PC-3 (cell line): ENCODE measurements at regions of chr5 and their contacts with region 1.

Region 1: DNA sequence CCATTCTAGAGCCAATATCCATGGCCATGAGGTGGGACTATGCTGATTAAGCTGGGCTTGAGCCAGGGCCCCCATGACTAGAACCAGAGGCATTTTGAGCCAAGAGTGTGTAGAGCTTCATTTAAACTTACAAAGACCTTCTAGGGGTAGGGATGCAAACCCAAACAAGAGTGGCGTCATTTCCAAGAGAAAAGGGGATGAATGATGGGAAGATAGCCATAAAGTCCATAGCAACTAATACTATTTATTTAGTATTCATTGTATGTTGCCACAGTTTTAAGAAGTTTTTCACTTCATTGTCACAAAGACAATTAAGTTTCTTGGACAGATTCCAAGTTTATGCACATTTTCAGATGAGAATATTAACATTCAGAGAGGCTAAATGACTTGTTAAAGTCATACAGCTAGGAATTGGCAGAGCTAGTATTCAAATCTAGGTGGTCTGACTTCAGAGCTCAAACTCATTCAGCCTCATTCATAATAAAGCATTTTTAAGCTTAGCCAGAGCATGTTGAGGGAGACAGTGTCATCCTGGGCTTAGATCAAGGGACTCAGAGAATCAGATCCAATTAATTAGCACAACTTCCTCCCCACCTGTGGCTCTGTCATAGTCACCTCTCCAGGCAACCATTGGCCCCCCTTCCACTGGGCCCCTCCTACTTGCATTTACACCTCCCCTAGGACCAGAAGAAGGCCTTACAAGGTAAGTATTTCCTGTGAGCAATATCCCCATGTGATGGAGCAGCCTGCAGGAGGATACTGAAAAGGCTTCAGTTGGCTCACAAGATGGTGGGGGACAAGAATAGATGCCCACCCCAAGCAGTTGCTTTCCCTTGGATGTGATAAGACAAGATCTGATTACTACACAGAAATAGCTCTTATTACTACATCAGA is 95.0 kb upstream of the PCSK1 start:
- DNase-seq: no peak
- ATAC-seq: no peak
- H3K4me3 ChIP-seq: no peak overlapping the region
- H3K27ac ChIP-seq: no peak overlapping the region
- H3K4me1 ChIP-seq: no peaks in the 10 kb centered on the region
- H3K27me3 ChIP-seq: no peaks in the 10 kb centered on the region
- CTCF ChIP-seq: no peak

Region 2: DNA sequence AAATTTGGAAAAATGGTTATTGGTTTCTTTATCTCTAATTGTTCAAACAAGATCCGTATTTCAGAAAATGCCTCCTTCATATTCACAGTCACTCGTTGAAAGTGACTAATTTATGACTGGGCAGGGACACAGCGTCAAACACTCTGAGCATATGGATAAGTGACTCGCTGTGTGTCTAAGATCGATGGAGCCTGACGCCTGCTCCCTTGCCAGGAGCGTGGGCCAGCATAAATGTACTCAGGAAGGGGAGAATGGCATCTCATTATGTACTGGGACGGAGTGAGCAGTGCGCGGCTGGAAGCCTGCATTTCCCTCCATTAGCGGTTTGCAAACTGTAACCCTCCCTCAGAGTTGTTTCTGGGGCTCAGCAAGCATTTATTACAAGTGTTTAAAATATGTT is 54.3 kb after region 1 on chr5:
- CTCF ChIA-PET with region 1: no interaction called
- POLR2A ChIA-PET with region 1: no interaction called
- intact Hi-C with region 1: loop called (anchors 5 kb)
- DNase-seq: peak; percentile 68
- ATAC-seq: peak; percentile 98
- H3K4me3 ChIP-seq: peak overlapping the region; percentile 34; the same call in 1 of the 2 replicates
- H3K27ac ChIP-seq: no peak overlapping the region
- H3K4me1 ChIP-seq: no peaks in the 10 kb centered on the region
- H3K27me3 ChIP-seq: no peaks in the 10 kb centered on the region
- CTCF ChIP-seq: no peak

Region 3: GRCh38 chr5:97208714-97209113 is 680.7 kb after region 1 on chr5:
- CTCF ChIA-PET with region 1: no interaction called
- POLR2A ChIA-PET with region 1: no interaction called
- intact Hi-C with region 1: no loop called
- DNase-seq: no peak
- ATAC-seq: no peak
- H3K4me3 ChIP-seq: no peak overlapping the region
- H3K27ac ChIP-seq: no peak overlapping the region
- H3K4me1 ChIP-seq: no peaks in the 10 kb centered on the region
- H3K27me3 ChIP-seq: no peaks in the 10 kb centered on the region
- CTCF ChIP-seq: no peak